Activated naive CD4-positive, alpha-beta T cell treated with anti-CD3 and anti-CD28 coated beads for 36 hours (primary cell): ENCODE measurements at regions of chr14 and their contacts with region 1.

Region 1: GRCh38 chr14:106372870-106373652 is 846.7 kb downstream of the TMEM121 start:
- DNase-seq: peak; percentile 90
- H3K4me3 Mint-ChIP-seq: peak overlapping the region; percentile 69
- H3K27ac Mint-ChIP-seq: peak overlapping the region; percentile 65
- H3K4me1 Mint-ChIP-seq: peaks cover 22% of the 10 kb centered on the region
- H3K27me3 Mint-ChIP-seq: no peaks in the 10 kb centered on the region

Region 2: DNA sequence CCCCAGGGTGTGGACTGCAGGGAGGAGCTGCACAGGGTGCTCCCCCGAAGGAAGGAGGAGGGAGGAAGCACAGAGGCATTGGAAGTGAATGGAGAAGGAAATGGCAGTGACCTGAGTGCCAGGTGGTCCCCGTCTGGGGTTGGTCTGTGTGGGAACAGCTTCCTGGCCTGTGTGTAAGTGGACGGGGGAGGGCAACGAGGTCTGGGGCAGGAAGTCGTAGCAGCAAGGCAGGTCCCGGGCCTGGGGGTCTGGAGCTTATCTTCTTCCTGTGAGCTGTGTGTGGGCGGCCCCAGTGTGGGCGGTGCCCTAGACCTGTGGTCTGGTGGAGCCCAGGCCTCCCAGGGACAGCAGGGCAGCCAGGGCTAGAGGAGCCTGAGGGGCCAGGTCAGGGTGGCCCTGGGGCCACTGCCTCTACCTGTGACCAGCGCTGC is 464.6 kb before region 1 on chr14:
- CTCF ChIA-PET with region 1: no interaction called
- intact Hi-C with region 1: no loop called
- DNase-seq: no peak
- H3K4me3 Mint-ChIP-seq: no peak overlapping the region
- H3K27ac Mint-ChIP-seq: no peak overlapping the region
- H3K4me1 Mint-ChIP-seq: no peaks in the 10 kb centered on the region
- H3K27me3 Mint-ChIP-seq: peaks cover 19% of the 10 kb centered on the region

Region 3: GRCh38 chr14:106062502-106063272 is 310.4 kb before region 1 on chr14:
- CTCF ChIA-PET with region 1: no interaction called
- intact Hi-C with region 1: no loop called
- DNase-seq: no peak
- H3K4me3 Mint-ChIP-seq: no peak overlapping the region
- H3K27ac Mint-ChIP-seq: no peak overlapping the region
- H3K4me1 Mint-ChIP-seq: peaks cover 15% of the 10 kb centered on the region
- H3K27me3 Mint-ChIP-seq: peaks cover 9% of the 10 kb centered on the region

Region 4: DNA sequence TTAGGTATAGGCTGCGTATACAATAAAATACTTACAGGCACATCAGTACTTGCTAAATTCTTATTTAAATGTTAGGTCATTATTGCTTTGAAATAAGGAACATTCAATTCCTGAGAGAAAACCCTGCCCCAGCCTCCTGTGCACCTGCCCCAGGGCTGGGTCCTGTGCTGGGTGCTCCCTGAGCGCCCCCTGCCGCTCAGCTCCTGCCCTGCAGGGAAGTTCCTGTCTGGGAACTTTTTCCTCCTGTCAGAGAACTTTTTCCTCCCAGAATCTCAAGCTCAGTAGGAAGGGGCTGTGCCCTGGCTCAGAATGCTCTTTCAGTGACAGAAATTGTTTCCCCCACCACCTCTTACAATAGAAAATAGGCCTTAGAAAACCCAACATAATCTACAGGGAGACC is 95.6 kb before region 1 on chr14:
- CTCF ChIA-PET with region 1: interaction called, 10 read pairs
- intact Hi-C with region 1: loop called (anchors 5 kb)
- DNase-seq: peak; percentile 50
- H3K4me3 Mint-ChIP-seq: no peak overlapping the region
- H3K27ac Mint-ChIP-seq: no peak overlapping the region
- H3K4me1 Mint-ChIP-seq: peaks cover 17% of the 10 kb centered on the region
- H3K27me3 Mint-ChIP-seq: peaks cover 25% of the 10 kb centered on the region

Region 5: DNA sequence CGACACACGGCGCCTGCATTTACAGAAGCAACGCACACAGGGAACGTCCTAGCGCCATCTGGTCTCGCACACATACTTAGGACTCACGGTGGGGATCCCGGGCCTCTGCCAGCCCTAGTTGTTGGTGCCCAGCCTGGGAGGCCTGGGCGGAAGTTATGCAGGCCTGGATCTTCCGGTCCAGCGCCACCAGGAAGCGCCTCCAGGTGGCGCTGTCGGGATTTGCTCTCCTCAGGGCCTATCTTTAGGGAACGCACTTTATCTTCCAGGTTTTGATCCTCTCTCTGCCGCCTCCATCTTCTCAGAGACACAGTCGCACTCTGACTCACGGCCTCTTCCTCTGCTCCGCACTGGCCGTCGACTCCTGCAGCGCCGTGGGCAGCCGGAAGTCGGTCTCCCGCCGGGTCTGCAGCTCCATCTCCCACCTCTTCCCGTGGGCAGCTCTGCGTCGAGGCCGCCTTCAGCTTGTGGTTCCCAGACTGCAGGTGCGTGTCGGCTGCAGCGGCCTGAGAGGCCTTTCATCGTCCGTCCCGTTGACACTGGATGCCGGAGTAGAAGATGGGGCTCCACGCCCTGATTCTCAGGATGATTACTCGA is 86.3 kb before region 1 on chr14:
- CTCF ChIA-PET with region 1: interaction called, 18 read pairs
- intact Hi-C with region 1: loop called (anchors 1 kb)
- DNase-seq: peak; percentile 32
- H3K4me3 Mint-ChIP-seq: no peak overlapping the region
- H3K27ac Mint-ChIP-seq: no peak overlapping the region
- H3K4me1 Mint-ChIP-seq: no peaks in the 10 kb centered on the region
- H3K27me3 Mint-ChIP-seq: peaks cover 9% of the 10 kb centered on the region

Region 6: DNA sequence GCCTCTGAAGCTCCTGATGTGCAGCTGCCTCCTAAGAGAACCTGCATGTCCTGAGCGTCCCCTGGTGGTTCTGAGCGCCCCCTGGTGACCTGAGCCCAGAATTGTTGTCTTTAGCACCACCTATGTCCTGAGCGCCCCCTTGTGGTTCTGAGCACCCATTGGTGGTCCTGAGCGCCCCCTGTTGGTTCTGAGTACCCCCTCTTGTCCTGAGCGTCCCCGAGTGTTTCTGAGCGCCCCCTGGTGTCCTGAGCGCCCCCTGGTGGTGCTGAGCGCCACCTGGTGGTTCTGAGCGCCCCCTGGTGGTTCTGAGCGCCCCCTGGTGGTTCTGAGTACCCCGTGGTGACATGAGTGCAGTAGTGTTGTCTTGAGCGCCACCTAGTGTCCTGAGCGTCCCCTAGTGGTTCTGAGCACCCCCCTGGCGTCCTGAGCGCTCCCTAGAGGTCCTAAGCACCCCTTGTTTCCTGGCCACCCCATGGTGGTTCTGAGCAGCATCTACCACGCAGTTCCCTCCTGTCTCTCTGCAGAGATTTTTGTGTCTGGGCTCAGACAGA is 64.1 kb before region 1 on chr14:
- CTCF ChIA-PET with region 1: interaction called, 10 read pairs
- intact Hi-C with region 1: loop called (anchors 1 kb)
- DNase-seq: peak; percentile 97
- H3K4me3 Mint-ChIP-seq: no peak overlapping the region
- H3K27ac Mint-ChIP-seq: no peak overlapping the region
- H3K4me1 Mint-ChIP-seq: no peaks in the 10 kb centered on the region
- H3K27me3 Mint-ChIP-seq: no peaks in the 10 kb centered on the region

Region 7: DNA sequence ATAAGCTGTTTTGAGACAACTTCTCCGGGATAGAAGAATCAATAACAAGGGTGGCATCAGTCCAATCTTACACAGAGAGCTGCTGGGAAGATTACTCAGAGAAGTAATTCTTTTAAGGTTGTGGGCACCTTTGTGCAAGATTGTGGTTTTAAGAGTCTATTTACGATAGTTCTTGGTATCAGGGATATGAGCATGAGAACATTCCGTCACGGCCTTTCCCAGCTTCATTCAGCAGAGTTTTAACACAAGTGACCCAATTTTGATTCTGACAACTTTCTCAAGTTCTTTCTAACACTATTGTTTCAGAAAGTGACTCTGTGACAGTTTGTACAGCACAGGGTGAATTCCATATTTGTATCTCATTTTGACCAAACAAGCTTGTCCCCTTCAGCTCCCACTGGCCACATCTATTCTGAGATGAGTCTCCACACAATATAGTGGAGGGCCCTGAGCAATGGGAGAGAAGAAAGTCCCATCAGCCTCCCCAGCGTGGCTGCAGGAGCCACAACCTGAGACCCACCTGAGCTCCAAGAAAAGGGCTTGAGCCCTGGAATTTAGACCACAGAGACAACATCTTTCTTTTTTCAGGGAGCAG is 22.5 kb after region 1 on chr14:
- CTCF ChIA-PET with region 1: interaction called, 23 read pairs
- intact Hi-C with region 1: loop called (anchors 1 kb)
- DNase-seq: peak; percentile 74
- H3K4me3 Mint-ChIP-seq: peak overlapping the region; percentile 63
- H3K27ac Mint-ChIP-seq: peak overlapping the region; percentile 92
- H3K4me1 Mint-ChIP-seq: peaks cover 39% of the 10 kb centered on the region
- H3K27me3 Mint-ChIP-seq: peaks cover 8% of the 10 kb centered on the region

Region 8: GRCh38 chr14:106586098-106586704 is 213.1 kb after region 1 on chr14:
- CTCF ChIA-PET with region 1: no interaction called
- intact Hi-C with region 1: no loop called
- DNase-seq: peak; percentile 84
- H3K4me3 Mint-ChIP-seq: no peak overlapping the region
- H3K27ac Mint-ChIP-seq: no peak overlapping the region
- H3K4me1 Mint-ChIP-seq: peaks cover 10% of the 10 kb centered on the region
- H3K27me3 Mint-ChIP-seq: peaks cover 20% of the 10 kb centered on the region